GM10248 (cell line): ENCODE measurements at regions of chr4 and their contacts with region 1.

Region 1: DNA sequence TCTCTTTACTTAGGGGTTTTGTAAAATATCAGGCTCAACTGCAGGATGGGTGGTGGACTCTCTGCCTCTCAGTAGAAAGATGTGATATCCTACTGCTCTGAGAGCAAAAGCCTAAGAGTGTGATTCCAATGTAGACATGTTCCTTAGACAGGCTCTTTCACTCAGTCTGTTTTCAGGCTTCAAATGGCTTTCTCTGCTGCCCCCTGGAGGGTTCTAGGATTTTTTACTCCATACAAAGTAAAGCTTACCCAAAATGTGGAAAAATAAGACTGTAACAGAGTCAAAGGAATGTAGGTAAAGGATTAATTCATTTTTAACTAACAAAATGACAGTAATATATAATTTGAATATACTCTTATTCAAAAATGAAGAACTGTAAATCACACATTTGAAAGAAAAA is 32.1 kb downstream of the ZGRF1 start:
- DNase-seq: peak; percentile 55
- CTCF ChIP-seq: peak; percentile 57

Region 2: GRCh38 chr4:112589206-112589605 is 15.4 kb before region 1 on chr4:
- CTCF ChIA-PET with region 1: interaction called, 19 read pairs
- POLR2A ChIA-PET with region 1: interaction called, 3 read pairs
- DNase-seq: no peak
- CTCF ChIP-seq: no peak

Region 3: DNA sequence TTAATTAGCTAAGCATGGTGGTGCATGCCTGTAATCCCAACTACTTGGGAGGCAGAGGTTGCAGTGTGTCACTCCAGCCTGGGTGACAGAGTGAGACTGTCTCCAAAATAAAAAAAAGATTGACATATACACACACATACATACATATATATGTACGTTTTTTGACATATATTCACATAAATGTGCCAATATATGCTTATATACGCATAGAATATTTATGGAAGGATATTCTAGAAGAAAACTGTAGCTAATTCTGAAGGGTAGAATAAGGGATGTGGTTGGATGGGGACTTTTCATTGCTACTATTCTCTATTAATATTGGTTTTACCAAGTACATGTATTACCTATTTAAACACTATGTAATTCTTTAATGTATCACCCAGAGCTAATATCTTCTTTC is 12.4 kb after region 1 on chr4:
- CTCF ChIA-PET with region 1: interaction called, 15 read pairs
- POLR2A ChIA-PET with region 1: no interaction called
- DNase-seq: no peak
- CTCF ChIP-seq: no peak

Region 4: GRCh38 chr4:113790478-113790877 is 1185.9 kb after region 1 on chr4:
- CTCF ChIA-PET with region 1: no interaction called
- POLR2A ChIA-PET with region 1: no interaction called
- DNase-seq: no peak
- CTCF ChIP-seq: no peak